ENCODE measurements at regions of chr1 and their contacts with region 1.

Region 1: DNA sequence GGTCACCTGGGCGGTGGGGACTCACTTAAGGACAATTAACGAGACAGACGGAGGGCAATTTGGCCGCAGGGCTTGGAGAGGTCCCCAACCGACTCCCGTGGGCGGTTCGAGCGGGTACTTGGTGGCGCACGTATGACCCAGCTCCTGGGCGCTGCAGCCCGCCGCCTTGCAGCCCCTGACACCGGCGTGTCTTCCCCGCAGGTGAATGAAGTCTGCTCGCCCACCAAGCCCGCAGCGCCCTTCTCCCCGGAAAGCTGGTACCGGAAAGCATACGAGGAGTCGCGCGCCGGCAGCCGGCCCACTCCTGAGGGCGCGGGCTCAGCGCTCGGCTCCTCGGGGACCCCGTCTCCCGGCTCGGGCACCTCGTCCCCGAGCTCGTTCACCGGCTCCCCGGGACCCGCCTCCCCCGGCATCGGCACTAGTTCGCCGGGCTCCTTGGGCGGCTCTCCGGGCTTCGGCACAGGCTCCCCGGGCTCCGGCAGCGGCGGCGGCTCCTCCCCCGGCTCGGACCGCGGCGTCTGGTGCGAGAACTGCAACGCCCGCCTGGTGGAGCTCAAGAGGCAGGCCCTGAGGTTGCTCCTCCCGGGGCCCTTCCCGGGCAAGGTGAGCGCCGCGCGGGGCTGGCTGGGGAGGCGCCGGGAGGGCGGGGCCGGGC is 1.4 kb downstream of the KIF26B start:
- DNase-seq: peak; percentile 93
- ATAC-seq: peak; percentile 83
- H3K4me3 Mint-ChIP-seq: peak overlapping the region; percentile 79
- H3K27ac Mint-ChIP-seq: no peak overlapping the region
- H3K4me1 Mint-ChIP-seq: peaks cover 11% of the 10 kb centered on the region
- H3K27me3 Mint-ChIP-seq: peaks cover 66% of the 10 kb centered on the region
- CTCF ChIP-seq: peak; percentile 61; the same call in 1 of the 2 replicates

Region 2: DNA sequence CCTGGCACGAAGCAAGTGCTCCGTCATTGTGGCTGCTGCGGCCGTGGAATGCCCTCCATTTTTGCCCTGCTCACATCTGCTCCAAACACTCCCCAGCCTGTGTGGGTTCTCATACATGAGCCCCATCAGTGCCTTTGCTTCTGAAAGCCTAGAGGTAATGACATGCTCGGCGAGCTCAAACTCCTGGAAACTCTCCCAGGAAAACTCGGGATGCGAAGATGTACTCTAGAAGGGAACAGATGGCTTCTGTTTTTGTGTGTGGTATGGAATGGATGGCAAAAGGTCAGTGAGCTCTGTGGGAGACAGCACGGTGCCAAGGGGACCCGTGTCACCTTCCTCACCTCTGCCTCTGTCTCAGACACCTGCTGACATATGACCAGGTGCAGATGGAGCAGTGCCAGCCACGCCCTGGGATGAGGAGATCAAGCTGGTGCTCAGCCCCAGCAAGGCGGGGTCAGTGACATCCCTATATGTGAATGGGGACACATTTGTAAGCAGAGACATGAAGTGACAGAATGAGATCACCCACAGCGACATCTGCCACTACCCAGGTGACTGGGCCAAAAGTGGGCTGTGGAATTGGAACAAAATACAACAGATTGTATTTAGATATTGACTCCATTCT is 404.8 kb before region 1 on chr1:
- CTCF ChIA-PET with region 1: no interaction called
- POLR2A ChIA-PET with region 1: no interaction called
- DNase-seq: no peak
- ATAC-seq: no peak
- H3K4me3 Mint-ChIP-seq: no peak overlapping the region
- H3K27ac Mint-ChIP-seq: no peak overlapping the region
- H3K4me1 Mint-ChIP-seq: peaks cover 5% of the 10 kb centered on the region
- H3K27me3 Mint-ChIP-seq: no peaks in the 10 kb centered on the region
- CTCF ChIP-seq: no peak

Region 3: DNA sequence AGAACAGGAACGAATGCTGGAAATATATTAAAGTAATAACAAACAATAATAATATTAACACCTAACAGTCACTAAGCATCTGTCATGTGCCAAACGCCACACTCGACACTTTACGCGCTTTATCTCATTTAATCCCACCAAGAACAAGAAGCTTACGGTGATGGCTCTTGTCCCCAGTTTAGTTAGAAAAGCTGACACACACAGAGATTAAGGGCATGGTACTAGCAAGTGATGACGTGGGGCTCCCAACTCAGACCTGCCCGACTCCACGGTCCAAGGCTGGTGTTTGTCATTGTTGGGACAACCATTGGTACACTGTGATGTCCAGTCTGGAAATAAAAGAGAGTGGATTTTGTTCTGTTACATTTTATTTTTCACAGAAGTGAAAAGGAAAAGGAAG is 42.6 kb before region 1 on chr1:
- CTCF ChIA-PET with region 1: no interaction called
- POLR2A ChIA-PET with region 1: no interaction called
- DNase-seq: no peak
- ATAC-seq: no peak
- H3K4me3 Mint-ChIP-seq: no peak overlapping the region
- H3K27ac Mint-ChIP-seq: no peak overlapping the region
- H3K4me1 Mint-ChIP-seq: no peaks in the 10 kb centered on the region
- H3K27me3 Mint-ChIP-seq: no peaks in the 10 kb centered on the region
- CTCF ChIP-seq: no peak

Region 4: DNA sequence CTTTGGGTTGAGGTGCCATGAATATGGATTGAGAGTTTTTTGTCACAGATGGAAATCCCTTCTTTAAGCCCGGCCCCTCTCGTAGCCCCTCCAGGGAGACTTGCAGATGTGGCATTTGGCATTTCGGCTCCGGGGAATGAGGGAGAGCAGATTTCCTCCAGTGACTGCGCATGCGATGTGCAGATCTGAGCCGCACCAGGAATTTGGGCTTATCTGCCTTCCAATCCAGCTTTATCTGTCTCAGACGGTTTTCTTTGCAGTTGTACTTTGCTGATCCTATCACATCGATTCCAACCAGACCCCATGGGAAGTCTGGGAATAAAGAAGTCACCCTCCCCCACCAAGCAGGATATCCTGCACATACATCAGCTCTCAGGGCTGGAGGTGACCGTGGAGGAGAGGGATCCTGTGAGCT is 10.3 kb after region 1 on chr1:
- CTCF ChIA-PET with region 1: interaction called, 19 read pairs
- POLR2A ChIA-PET with region 1: no interaction called
- DNase-seq: no peak
- ATAC-seq: peak; percentile 65
- H3K4me3 Mint-ChIP-seq: no peak overlapping the region
- H3K27ac Mint-ChIP-seq: no peak overlapping the region
- H3K4me1 Mint-ChIP-seq: peaks cover 23% of the 10 kb centered on the region
- H3K27me3 Mint-ChIP-seq: no peaks in the 10 kb centered on the region
- CTCF ChIP-seq: no peak

Region 5: GRCh38 chr1:245216366-245217115 is 60.3 kb after region 1 on chr1:
- CTCF ChIA-PET with region 1: interaction called, 17 read pairs
- POLR2A ChIA-PET with region 1: no interaction called
- DNase-seq: no peak
- ATAC-seq: peak; percentile 81
- H3K4me3 Mint-ChIP-seq: no peak overlapping the region
- H3K27ac Mint-ChIP-seq: peak overlapping the region; percentile 9; the same call in 1 of the 2 replicates
- H3K4me1 Mint-ChIP-seq: peaks cover 35% of the 10 kb centered on the region
- H3K27me3 Mint-ChIP-seq: peaks cover 5% of the 10 kb centered on the region
- CTCF ChIP-seq: no peak

Region 6: GRCh38 chr1:245258271-245258920 is 102.2 kb after region 1 on chr1:
- CTCF ChIA-PET with region 1: interaction called, 10 read pairs
- POLR2A ChIA-PET with region 1: no interaction called
- DNase-seq: no peak
- ATAC-seq: no peak
- H3K4me3 Mint-ChIP-seq: no peak overlapping the region
- H3K27ac Mint-ChIP-seq: no peak overlapping the region; the same call in 1 of the 2 replicates
- H3K4me1 Mint-ChIP-seq: peaks cover 49% of the 10 kb centered on the region
- H3K27me3 Mint-ChIP-seq: peaks cover 3% of the 10 kb centered on the region; the same call in 1 of the 2 replicates
- CTCF ChIP-seq: no peak

Region 7: GRCh38 chr1:245512181-245512888 is 356.1 kb after region 1 on chr1:
- CTCF ChIA-PET with region 1: interaction called, 10 read pairs
- POLR2A ChIA-PET with region 1: no interaction called
- DNase-seq: no peak
- ATAC-seq: no peak
- H3K4me3 Mint-ChIP-seq: no peak overlapping the region
- H3K27ac Mint-ChIP-seq: 0 out of 2 replicates have a peak overlapping the region, but pooled peaks have one; percentile 3
- H3K4me1 Mint-ChIP-seq: peaks cover 30% of the 10 kb centered on the region
- H3K27me3 Mint-ChIP-seq: no peaks in the 10 kb centered on the region; the same call in 1 of the 2 replicates
- CTCF ChIP-seq: no peak

Measured in WTC11 (cell line).